Dendritic cell treated with granulocyte-macrophage colony-stimulating factor and Interleukin-4, amounts not matched to agents 40 ng/mL and 50 ng/mL, for 4 days (primary cell): ENCODE measurements at regions of chrX and their contacts with region 1.

Region 1: GRCh38 chrX:50579955-50580354 is 109.3 kb upstream of the DGKK start:
- H3K4me3 Mint-ChIP-seq: no peak overlapping the region
- H3K27ac Mint-ChIP-seq: no peak overlapping the region
- H3K4me1 Mint-ChIP-seq: peaks cover 4% of the 10 kb centered on the region
- H3K27me3 Mint-ChIP-seq: peaks cover 2% of the 10 kb centered on the region

Region 2: DNA sequence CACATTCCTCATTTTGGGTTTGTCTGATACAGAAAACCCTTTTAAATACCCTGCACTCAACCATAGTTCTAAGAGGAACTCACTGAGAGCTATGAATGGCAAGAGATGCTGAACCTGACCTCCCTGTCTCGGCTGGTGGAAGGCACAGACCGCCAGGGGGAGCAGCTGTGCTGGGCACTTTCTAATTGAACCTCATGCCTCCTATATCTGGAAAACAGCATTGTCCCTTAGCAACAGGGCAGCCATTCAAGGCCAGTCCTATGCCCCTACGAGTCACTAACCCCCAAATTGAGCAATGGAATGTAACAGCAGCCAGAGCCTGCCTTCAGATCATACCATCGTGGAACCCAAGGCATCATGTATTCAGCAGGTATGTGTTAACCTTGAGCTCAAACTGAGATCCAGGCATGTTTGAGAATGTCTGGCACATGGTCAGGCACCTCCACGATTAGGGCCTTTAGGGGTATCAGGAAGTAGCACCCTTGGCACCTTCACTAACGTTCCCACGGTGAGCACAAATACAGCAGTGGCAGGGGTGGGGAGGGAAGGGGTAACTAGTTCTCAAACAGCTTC is 695.6 kb before region 1 on chrX:
- intact Hi-C with region 1: loop called (anchors 1 kb)
- H3K4me3 Mint-ChIP-seq: no peak overlapping the region
- H3K27ac Mint-ChIP-seq: no peak overlapping the region
- H3K4me1 Mint-ChIP-seq: peaks cover 22% of the 10 kb centered on the region
- H3K27me3 Mint-ChIP-seq: no peaks in the 10 kb centered on the region

Region 3: DNA sequence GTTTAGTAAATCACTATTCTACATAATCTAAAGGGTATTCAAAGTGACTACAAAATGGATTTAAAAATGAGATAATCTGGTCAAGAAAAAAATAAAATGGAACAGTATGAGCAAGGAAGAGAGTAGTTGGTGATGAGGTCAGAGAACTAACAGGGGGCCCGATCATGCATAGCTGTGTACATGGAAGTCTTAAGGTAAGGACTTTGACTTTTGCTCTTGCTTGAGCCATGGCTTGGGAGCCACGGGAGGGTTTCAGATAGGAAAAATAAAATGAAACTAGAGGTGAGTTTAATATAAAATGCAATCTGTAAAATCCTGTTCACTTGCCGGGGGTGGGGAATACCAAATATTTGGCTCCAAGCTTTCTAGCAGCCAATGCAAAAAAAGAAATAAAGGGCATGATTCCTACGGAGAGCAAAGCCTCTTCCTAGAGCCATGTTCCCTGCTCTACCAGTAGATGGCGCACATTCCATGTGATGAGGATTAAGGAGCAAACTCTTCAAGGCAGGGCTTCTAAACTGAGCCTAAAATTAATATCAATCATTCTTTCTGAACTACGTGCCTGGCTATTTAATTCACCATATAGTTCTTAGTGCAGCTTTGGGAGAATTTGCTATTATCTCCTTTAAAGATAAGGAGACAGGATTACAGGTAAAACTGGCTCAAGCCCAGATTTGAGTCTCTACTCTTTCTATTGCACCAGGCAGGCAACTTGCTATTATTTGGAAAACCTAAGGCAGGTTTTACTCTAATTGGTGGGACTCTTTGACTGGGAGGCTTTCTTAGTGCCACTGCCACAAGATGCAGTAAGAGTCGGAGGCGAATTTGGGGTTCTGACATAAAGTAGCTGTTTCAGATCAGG is 664.4 kb before region 1 on chrX:
- intact Hi-C with region 1: loop called (anchors 2 kb)
- H3K4me3 Mint-ChIP-seq: no peak overlapping the region
- H3K27ac Mint-ChIP-seq: no peak overlapping the region
- H3K4me1 Mint-ChIP-seq: peaks cover 2% of the 10 kb centered on the region
- H3K27me3 Mint-ChIP-seq: no peaks in the 10 kb centered on the region

Region 4: GRCh38 chrX:50100188-50100587 is 479.8 kb before region 1 on chrX:
- intact Hi-C with region 1: loop called (anchors 2 kb)
- H3K4me3 Mint-ChIP-seq: no peak overlapping the region
- H3K27ac Mint-ChIP-seq: no peak overlapping the region
- H3K4me1 Mint-ChIP-seq: peaks cover 9% of the 10 kb centered on the region
- H3K27me3 Mint-ChIP-seq: no peaks in the 10 kb centered on the region

Region 5: GRCh38 chrX:50536955-50537354 is 43.0 kb before region 1 on chrX:
- intact Hi-C with region 1: no loop called
- H3K4me3 Mint-ChIP-seq: no peak overlapping the region
- H3K27ac Mint-ChIP-seq: no peak overlapping the region
- H3K4me1 Mint-ChIP-seq: peaks cover 7% of the 10 kb centered on the region
- H3K27me3 Mint-ChIP-seq: peaks cover 3% of the 10 kb centered on the region

Region 6: DNA sequence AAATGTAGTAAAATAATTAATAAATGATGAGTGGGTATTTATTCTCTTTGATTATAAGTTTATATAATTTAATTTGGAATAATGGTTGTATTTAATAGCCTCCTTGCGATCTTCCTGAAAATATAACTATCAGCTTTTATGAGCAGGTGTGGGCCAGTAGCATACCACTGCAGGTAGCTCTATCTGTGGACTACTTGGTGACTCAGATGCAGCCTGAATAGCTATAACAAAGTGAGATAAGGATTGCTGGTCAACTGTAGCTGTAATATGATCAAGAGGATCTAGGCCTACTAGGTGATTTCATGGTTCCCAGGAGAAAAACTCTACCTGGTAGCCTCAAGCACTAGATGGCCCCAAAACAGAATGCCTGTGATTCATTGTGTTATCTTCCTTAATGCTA is 283.5 kb after region 1 on chrX:
- intact Hi-C with region 1: no loop called
- H3K4me3 Mint-ChIP-seq: no peak overlapping the region
- H3K27ac Mint-ChIP-seq: no peak overlapping the region
- H3K4me1 Mint-ChIP-seq: no peaks in the 10 kb centered on the region
- H3K27me3 Mint-ChIP-seq: no peaks in the 10 kb centered on the region